ENCODE measurements at regions of chr7 and their contacts with region 1.

Region 1: DNA sequence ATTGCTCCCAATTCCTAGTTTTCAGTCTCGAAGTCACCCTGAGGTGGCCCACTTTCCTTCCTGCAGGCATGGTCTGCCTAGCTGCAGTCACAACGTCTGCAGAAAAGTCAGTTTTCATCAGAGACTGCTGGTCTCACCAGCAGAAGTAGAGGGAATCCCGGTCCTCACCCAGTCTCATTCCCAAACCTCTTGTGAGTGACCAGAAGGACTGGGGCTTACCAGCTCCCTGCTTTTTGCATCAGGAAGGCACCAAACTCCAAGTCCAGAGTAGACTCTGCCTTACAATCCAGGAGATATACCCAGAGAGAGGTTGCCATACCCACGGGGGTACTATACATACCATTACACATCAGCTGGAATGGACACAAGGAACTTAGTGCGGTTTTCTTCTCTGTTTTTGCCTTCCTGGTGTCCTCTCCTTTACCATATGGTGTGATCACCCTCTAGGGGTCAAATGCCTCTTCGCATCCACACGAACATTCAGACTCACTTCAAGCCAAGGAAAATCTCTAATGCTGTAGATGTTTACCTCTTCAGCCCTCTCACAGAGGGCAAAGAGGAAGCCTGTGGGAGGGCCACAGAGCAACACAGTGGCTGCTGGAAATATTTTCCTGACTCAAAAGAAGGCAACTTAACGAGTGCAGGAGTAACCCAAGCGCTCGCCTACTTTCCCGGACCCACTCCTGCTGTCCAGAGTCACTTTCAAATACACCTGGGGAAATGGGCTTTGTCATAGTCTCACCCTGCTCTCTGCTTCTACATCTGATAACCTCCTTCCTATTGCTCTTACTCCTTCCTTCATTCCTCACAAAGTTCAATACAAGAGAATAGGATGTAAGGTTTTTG is 220.9 kb downstream of the C7orf25 start:
- DNase-seq: peak; percentile 30 to 42
- H3K4me3 ChIP-seq: no peak overlapping the region
- H3K4me3 Mint-ChIP-seq: no peak overlapping the region
- H3K27ac Mint-ChIP-seq: no peak overlapping the region
- H3K4me1 ChIP-seq: no peaks in the 10 kb centered on the region
- H3K4me1 Mint-ChIP-seq: no peaks in the 10 kb centered on the region
- H3K27me3 ChIP-seq: peaks cover 1% of the 10 kb centered on the region; the same call in 1 of the 2 replicates
- H3K27me3 Mint-ChIP-seq: peaks cover 5% of the 10 kb centered on the region
- CTCF ChIP-seq: peak; percentile 31 to 62

Region 2: DNA sequence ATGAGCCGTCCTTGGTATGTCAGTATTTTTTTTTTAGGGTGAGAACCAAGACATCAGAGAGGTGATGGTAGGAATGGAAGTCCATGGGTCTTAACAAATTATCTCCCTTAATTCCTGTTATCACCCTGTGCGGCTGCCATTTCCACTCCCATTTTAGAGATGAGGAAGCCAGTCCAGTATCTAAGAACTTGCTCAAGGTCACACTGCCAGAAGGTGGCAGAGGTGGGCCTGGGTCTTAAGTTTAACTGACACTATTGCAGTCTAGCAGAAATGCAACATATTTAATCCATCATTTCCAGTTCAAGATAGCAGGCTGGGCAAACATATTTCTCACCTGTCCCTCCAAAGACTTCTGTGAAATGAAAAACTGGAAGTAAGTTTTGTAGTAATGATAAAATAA is 562.3 kb before region 1 on chr7:
- CTCF ChIA-PET with region 1: no interaction called
- POLR2A ChIA-PET with region 1: no interaction called
- intact Hi-C with region 1: loop called (anchors 1 kb)
- DNase-seq: peak in 1 of 2 experiments; percentile 17
- H3K4me3 ChIP-seq: no peak overlapping the region
- H3K4me3 Mint-ChIP-seq: no peak overlapping the region
- H3K27ac Mint-ChIP-seq: no peak overlapping the region
- H3K4me1 ChIP-seq: no peaks in the 10 kb centered on the region; the same call in 1 of the 2 replicates
- H3K4me1 Mint-ChIP-seq: no peaks in the 10 kb centered on the region
- H3K27me3 ChIP-seq: no peaks in the 10 kb centered on the region
- H3K27me3 Mint-ChIP-seq: peaks cover 14% of the 10 kb centered on the region
- CTCF ChIP-seq: peak in 1 of 2 experiments; percentile 31

Region 3: GRCh38 chr7:42272793-42273665 is 418.0 kb before region 1 on chr7:
- CTCF ChIA-PET with region 1: no interaction called
- POLR2A ChIA-PET with region 1: no interaction called
- intact Hi-C with region 1: loop called (anchors 2 kb)
- DNase-seq: no peak
- H3K4me3 ChIP-seq: no peak overlapping the region
- H3K4me3 Mint-ChIP-seq: no peak overlapping the region
- H3K27ac Mint-ChIP-seq: no peak overlapping the region
- H3K4me1 ChIP-seq: no peaks in the 10 kb centered on the region
- H3K4me1 Mint-ChIP-seq: no peaks in the 10 kb centered on the region
- H3K27me3 ChIP-seq: no peaks in the 10 kb centered on the region
- H3K27me3 Mint-ChIP-seq: peaks cover 13% of the 10 kb centered on the region
- CTCF ChIP-seq: peak in 1 of 2 experiments; percentile 12

Region 4: DNA sequence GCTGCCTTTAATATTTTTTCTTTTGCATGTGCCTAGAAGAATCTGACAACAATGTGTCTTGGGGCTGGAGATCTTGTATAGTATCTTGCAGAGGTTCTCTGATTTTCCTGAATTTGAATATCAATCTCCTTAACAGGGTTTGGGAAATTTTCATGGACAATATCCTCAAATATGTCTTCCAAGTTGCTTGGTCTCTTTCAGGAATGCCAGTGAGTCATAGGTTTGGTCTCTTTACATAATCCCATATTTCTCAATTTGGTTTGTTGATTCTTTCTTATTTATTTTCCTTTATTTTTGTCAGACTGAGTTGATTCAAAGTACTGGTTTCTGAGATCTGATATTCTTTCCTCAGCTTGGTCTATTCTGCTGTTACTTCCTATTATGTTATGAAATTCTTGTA is 245.3 kb before region 1 on chr7:
- CTCF ChIA-PET with region 1: no interaction called
- POLR2A ChIA-PET with region 1: no interaction called
- intact Hi-C with region 1: no loop called
- DNase-seq: no peak
- H3K4me3 ChIP-seq: no peak overlapping the region
- H3K4me3 Mint-ChIP-seq: no peak overlapping the region
- H3K27ac Mint-ChIP-seq: no peak overlapping the region
- H3K4me1 ChIP-seq: no peaks in the 10 kb centered on the region
- H3K4me1 Mint-ChIP-seq: no peaks in the 10 kb centered on the region
- H3K27me3 ChIP-seq: no peaks in the 10 kb centered on the region
- H3K27me3 Mint-ChIP-seq: peaks cover 3% of the 10 kb centered on the region
- CTCF ChIP-seq: no peak

Region 5: GRCh38 chr7:42843205-42843800 is 152.3 kb after region 1 on chr7:
- CTCF ChIA-PET with region 1: no interaction called
- POLR2A ChIA-PET with region 1: no interaction called
- intact Hi-C with region 1: loop called (anchors 10 kb)
- DNase-seq: peak; percentile 41 to 44
- H3K4me3 ChIP-seq: no peak overlapping the region
- H3K4me3 Mint-ChIP-seq: no peak overlapping the region
- H3K27ac Mint-ChIP-seq: no peak overlapping the region
- H3K4me1 ChIP-seq: no peaks in the 10 kb centered on the region
- H3K4me1 Mint-ChIP-seq: no peaks in the 10 kb centered on the region
- H3K27me3 ChIP-seq: no peaks in the 10 kb centered on the region; the same call in 1 of the 2 replicates
- H3K27me3 Mint-ChIP-seq: peaks cover 13% of the 10 kb centered on the region
- CTCF ChIP-seq: peak; percentile 39 to 56